ENCODE measurements at regions of chr11 and their contacts with region 1.

Region 1: GRCh38 chr11:76152086-76152681 is 54.1 kb downstream of the WNT11 start:
- DNase-seq: no peak
- H3K4me3 ChIP-seq: peak overlapping the region; percentile 6; the same call in 1 of the 2 replicates
- CTCF ChIP-seq: peak; percentile 97

Region 2: DNA sequence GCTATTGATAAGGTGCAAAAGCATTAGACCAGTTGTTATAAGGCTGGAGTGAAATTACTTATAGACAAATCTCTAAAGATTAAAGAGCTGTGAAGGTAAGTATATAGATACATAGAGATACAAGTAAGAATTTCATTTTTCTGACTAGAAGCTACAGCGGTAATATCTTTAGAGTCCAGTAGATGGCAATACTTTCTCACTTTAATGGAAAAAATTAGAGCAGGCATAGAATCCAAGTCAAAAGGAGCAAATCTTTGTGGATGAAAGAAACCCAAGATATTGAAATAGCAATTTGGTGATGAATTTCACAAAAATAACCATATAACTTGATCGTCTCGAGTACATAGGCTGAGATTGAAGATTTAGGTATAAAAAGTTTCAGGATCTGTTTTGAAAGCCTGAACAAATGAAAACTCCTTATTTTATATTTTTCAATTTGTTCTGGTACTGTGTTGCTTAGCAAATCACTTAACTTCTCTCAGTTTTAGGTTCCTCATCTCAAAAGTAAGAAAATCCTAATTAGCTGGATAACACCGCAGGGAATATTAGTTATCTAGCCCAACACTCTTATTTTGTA is 255.3 kb before region 1 on chr11:
- CTCF ChIA-PET with region 1: interaction called, 157 read pairs
- POLR2A ChIA-PET with region 1: no interaction called
- DNase-seq: peak; percentile 16
- H3K4me3 ChIP-seq: no peak overlapping the region
- CTCF ChIP-seq: peak; percentile 31

Region 3: GRCh38 chr11:75903276-75903675 is 248.9 kb before region 1 on chr11:
- CTCF ChIA-PET with region 1: interaction called, 157 read pairs
- POLR2A ChIA-PET with region 1: no interaction called
- DNase-seq: no peak
- H3K4me3 ChIP-seq: no peak overlapping the region
- CTCF ChIP-seq: no peak

Region 4: GRCh38 chr11:76120513-76121101 is 31.6 kb before region 1 on chr11:
- CTCF ChIA-PET with region 1: interaction called, 12 read pairs
- POLR2A ChIA-PET with region 1: no interaction called
- DNase-seq: no peak
- H3K4me3 ChIP-seq: no peak overlapping the region
- CTCF ChIP-seq: no peak

Region 5: DNA sequence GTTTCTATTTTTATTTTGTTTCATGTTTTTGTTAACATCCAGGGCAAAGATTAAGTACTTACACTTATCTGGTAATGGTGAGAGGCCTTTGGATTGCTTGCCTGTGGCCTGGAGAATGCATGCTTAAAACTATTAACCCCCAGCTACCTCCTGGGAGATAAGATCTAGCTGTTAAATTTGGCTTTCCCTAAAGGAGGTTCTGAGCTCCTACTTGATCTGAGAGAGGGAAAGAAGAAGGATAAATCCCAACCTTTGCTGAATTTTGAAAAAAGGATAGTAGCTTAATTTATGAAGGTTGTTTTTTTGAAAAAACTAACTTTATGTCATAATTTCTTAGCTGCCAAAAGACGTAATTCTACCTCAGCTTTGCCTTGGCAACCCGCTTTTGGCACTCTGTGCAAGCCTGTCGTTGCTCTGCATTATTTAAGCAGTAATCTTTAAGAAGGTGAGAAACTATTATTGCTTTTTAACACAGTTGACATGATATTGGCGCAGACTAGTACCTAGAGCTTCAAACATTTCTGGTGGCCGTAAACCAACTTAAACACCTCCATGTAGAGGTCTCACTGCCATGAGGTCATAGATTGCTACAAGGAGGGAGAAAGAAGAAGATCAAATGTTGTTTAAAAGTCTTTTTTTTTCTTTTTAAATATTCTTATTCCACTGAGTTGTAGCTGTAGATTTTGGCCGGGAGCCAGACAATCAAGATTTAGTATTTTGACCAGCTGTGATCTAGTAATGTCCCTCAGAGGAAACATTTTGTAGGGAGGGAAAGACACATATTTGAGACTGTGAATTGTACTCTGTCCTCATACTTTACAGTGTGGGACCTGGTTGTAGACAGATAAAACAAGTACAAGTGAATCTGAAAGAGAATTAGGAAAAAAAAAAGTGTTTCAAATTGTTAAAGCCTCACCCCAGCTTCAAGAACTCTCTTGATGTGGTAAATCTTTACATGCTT is 20.2 kb before region 1 on chr11:
- CTCF ChIA-PET with region 1: interaction called, 19 read pairs
- POLR2A ChIA-PET with region 1: no interaction called
- DNase-seq: no peak
- H3K4me3 ChIP-seq: no peak overlapping the region
- CTCF ChIP-seq: no peak

Region 6: GRCh38 chr11:76140912-76141574 is 11.1 kb before region 1 on chr11:
- CTCF ChIA-PET with region 1: interaction called, 55 read pairs
- POLR2A ChIA-PET with region 1: no interaction called
- DNase-seq: no peak
- H3K4me3 ChIP-seq: no peak overlapping the region
- CTCF ChIP-seq: no peak

Region 7: GRCh38 chr11:76169473-76169903 is 17.3 kb after region 1 on chr11:
- CTCF ChIA-PET with region 1: interaction called, 10 read pairs
- POLR2A ChIA-PET with region 1: no interaction called
- DNase-seq: no peak
- H3K4me3 ChIP-seq: no peak overlapping the region
- CTCF ChIP-seq: no peak